CD8-positive, alpha-beta T cell (primary cell): ENCODE measurements at regions of chr13 and their contacts with region 1.

Region 1: GRCh38 chr13:108218044-108218974 is at the start of gene ABHD13:
- DNase-seq: peak; percentile 80 to 96 (median 89)
- ATAC-seq: peak; percentile 61
- H3K4me3 ChIP-seq: peak within 1 kb of the TSS; percentile 86 to 88
- H3K4me3 Mint-ChIP-seq: peak within 1 kb of the TSS; percentile 96
- H3K27ac ChIP-seq: peak within 1 kb of the TSS; percentile 61 to 81
- H3K27ac Mint-ChIP-seq: peak within 1 kb of the TSS; percentile 97
- H3K4me1 ChIP-seq: peaks cover 41% of the 10 kb centered on the region
- H3K4me1 Mint-ChIP-seq: peaks cover 57% of the 10 kb centered on the region
- H3K27me3 ChIP-seq: no peaks in the 10 kb centered on the region
- H3K27me3 Mint-ChIP-seq: no peaks in the 10 kb centered on the region
- CTCF ChIP-seq: no peak
- total RNA-seq, gene ABHD13: 15.6 to 15.7 TPM

Region 2: DNA sequence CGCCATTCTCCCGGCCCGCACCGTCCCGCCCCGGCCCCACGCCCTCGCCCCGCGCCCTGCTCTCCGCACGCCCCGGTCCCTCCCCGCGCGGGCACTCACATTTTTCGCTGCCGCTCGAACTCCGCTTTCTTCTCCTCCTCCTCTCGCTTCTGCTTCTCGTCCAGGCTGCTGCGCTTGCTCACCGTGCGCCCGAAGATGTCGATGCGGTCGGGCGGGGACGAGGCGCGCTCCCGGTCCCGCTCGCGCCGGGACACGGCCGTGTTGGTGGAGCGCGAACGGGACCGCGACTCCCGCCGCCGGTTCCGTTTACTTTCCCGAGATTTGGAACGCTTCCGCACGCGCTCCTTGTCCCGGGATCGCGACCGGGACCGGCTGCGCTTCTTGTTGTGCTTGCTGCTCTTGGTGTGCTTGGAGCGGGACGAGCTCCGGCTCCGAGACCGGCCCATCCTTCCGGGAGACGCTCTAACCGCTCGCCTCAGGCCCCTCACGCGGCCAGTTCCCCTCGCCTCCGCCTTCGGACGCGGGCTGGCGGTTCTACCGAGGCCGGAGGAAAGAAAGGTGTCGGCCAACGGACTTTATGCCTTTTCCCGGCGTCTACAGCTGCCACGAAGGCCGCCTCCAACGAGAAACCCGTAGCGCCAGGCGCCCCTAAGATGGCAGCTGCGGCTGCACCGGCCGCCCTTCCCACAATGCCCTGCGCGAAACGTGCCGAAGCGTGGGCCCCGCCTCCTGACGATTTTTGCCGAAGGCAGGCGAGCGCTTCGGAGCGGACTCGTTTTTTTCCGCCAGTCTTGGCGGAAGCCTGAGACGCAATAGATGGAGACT is 1650.6 kb before region 1 on chr13 and contains the start of gene ARGLU1:
- CTCF ChIA-PET with region 1: no interaction called
- POLR2A ChIA-PET with region 1: no interaction called
- intact Hi-C with region 1: loop called in 1 of 2 experiments (anchors 10 kb)
- DNase-seq: peak; percentile 92 to 98 (median 95)
- ATAC-seq: peak; percentile 81
- H3K4me3 ChIP-seq: peak within 1 kb of the TSS; percentile 79 to 91
- H3K4me3 Mint-ChIP-seq: peak within 1 kb of the TSS; percentile 98
- H3K27ac ChIP-seq: peak within 1 kb of the TSS; percentile 91 to 94
- H3K27ac Mint-ChIP-seq: peak within 1 kb of the TSS; percentile 95
- H3K4me1 ChIP-seq: peaks cover 41% of the 10 kb centered on the region
- H3K4me1 Mint-ChIP-seq: peaks cover 58% of the 10 kb centered on the region
- H3K27me3 ChIP-seq: no peaks in the 10 kb centered on the region
- H3K27me3 Mint-ChIP-seq: no peaks in the 10 kb centered on the region
- CTCF ChIP-seq: no peak
- total RNA-seq, gene ARGLU1: 130 to 145 TPM

Region 3: DNA sequence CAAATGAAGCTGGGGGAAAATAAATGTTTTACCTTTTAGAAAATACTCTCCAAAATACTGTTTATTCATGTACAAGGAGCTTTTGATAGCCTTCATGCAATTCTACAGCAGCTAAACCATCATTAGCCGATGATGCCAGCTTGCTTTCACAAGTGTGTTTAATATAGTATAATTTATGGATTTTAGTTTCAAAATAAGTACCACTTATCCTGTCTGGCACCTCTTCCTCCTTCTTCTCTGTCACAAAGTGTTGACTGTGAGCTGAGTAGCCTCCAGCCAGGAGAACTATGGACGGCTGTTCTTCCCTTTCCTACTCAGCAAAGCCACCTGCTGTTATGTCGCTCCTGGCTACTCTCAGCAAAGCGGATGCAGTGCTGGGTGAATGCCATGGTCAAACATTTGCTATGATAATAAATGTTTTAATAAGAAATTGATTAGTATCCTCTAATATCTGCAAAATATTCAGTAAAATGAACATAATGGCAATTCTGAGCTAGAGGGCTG is 241.2 kb before region 1 on chr13:
- CTCF ChIA-PET with region 1: no interaction called
- POLR2A ChIA-PET with region 1: no interaction called
- intact Hi-C with region 1: no loop called
- DNase-seq: no peak
- ATAC-seq: no peak
- H3K4me3 ChIP-seq: no peak overlapping the region
- H3K4me3 Mint-ChIP-seq: no peak overlapping the region
- H3K27ac ChIP-seq: no peak overlapping the region
- H3K27ac Mint-ChIP-seq: no peak overlapping the region
- H3K4me1 ChIP-seq: no peaks in the 10 kb centered on the region
- H3K4me1 Mint-ChIP-seq: no peaks in the 10 kb centered on the region
- H3K27me3 ChIP-seq: no peaks in the 10 kb centered on the region
- H3K27me3 Mint-ChIP-seq: no peaks in the 10 kb centered on the region
- CTCF ChIP-seq: no peak

Region 4: GRCh38 chr13:108176685-108177274 is 41.5 kb before region 1 on chr13:
- CTCF ChIA-PET with region 1: interaction called, 3 read pairs
- POLR2A ChIA-PET with region 1: interaction called, 4 read pairs
- intact Hi-C with region 1: loop called (anchors 5 kb)
- DNase-seq: peak in 8 of 9 experiments; percentile 11 to 66 (median 56)
- ATAC-seq: peak; percentile 57
- H3K4me3 ChIP-seq: no peak overlapping the region
- H3K4me3 Mint-ChIP-seq: no peak overlapping the region
- H3K27ac ChIP-seq: no peak overlapping the region
- H3K27ac Mint-ChIP-seq: no peak overlapping the region
- H3K4me1 ChIP-seq: no peaks in the 10 kb centered on the region
- H3K4me1 Mint-ChIP-seq: no peaks in the 10 kb centered on the region
- H3K27me3 ChIP-seq: no peaks in the 10 kb centered on the region
- H3K27me3 Mint-ChIP-seq: peaks cover 6% of the 10 kb centered on the region
- CTCF ChIP-seq: peak; percentile 69

Region 5: GRCh38 chr13:108269601-108270328 is 51.5 kb after region 1 on chr13 and contains the start of gene TNFSF13B:
- CTCF ChIA-PET with region 1: no interaction called
- POLR2A ChIA-PET with region 1: interaction called, 4 read pairs
- intact Hi-C with region 1: loop called in 1 of 2 experiments (anchors 2 kb)
- DNase-seq: peak in 8 of 9 experiments; percentile 14 to 66 (median 32)
- ATAC-seq: peak; percentile 64
- H3K4me3 ChIP-seq: peak within 1 kb of the TSS; percentile 43 to 50
- H3K4me3 Mint-ChIP-seq: peak within 1 kb of the TSS; percentile 87
- H3K27ac ChIP-seq: peak within 1 kb of the TSS; percentile 12 to 72
- H3K27ac Mint-ChIP-seq: peak within 1 kb of the TSS; percentile 85
- H3K4me1 ChIP-seq: peaks cover 12% of the 10 kb centered on the region
- H3K4me1 Mint-ChIP-seq: peaks cover 36% of the 10 kb centered on the region
- H3K27me3 ChIP-seq: no peaks in the 10 kb centered on the region
- H3K27me3 Mint-ChIP-seq: no peaks in the 10 kb centered on the region
- CTCF ChIP-seq: no peak
- total RNA-seq, gene TNFSF13B: 0.98 to 1.3 TPM

Region 6: DNA sequence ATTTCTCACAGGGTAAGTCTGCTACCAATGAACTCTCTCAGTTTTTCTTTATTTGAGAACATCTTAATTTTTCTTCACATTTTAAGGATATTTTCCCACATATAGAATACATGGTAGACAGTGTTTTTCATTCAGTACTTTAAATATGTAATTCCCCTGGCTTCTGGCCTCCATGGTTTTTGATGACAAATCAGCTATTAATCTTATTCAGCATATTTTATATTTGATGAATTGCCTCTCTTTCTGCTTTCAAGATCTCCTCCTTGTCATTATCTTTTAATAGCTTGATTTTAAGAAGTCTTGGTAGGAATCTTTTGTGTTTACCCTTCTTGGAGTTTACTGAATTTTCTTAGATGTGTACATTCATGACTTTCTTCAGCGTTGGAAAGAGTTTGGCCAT is 78.8 kb after region 1 on chr13:
- CTCF ChIA-PET with region 1: no interaction called
- POLR2A ChIA-PET with region 1: no interaction called
- intact Hi-C with region 1: no loop called
- DNase-seq: no peak
- ATAC-seq: no peak
- H3K4me3 ChIP-seq: no peak overlapping the region
- H3K4me3 Mint-ChIP-seq: no peak overlapping the region
- H3K27ac ChIP-seq: no peak overlapping the region
- H3K27ac Mint-ChIP-seq: no peak overlapping the region
- H3K4me1 ChIP-seq: no peaks in the 10 kb centered on the region
- H3K4me1 Mint-ChIP-seq: no peaks in the 10 kb centered on the region
- H3K27me3 ChIP-seq: no peaks in the 10 kb centered on the region
- H3K27me3 Mint-ChIP-seq: no peaks in the 10 kb centered on the region
- CTCF ChIP-seq: no peak